Sigmoid colon (tissue), 7 donors: ENCODE measurements at regions of chr3 and their contacts with region 1.

Region 1: GRCh38 chr3:197002701-197003454 is 26.7 kb downstream of the MELTF start:
- DNase-seq: peak; percentile 85
- H3K4me3 ChIP-seq: peak overlapping the region; percentile 46 to 80 (median 72)
- H3K27ac ChIP-seq: peak overlapping the region; percentile 82 to 90 (median 86)
- H3K4me1 ChIP-seq: peaks cover 0 to 18% (median 13%) of the 10 kb centered on the region in 4 donors
- H3K27me3 ChIP-seq: no peaks in the 10 kb centered on the region
- CTCF ChIP-seq: peak in 3 of 4 experiments; percentile 19 to 79 (median 41)
- EP300 ChIP-seq: no peak
- POLR2A ChIP-seq: no peak

Region 2: GRCh38 chr3:196927571-196928453 is 75.1 kb before region 1 on chr3:
- intact Hi-C with region 1: no loop called
- DNase-seq: no peak
- H3K4me3 ChIP-seq: no peak overlapping the region
- H3K27ac ChIP-seq: no peak overlapping the region
- H3K4me1 ChIP-seq: no peaks in the 10 kb centered on the region
- H3K27me3 ChIP-seq: no peaks in the 10 kb centered on the region
- CTCF ChIP-seq: no peak
- EP300 ChIP-seq: no peak
- POLR2A ChIP-seq: no peak

Region 3: GRCh38 chr3:197029511-197030167 is 26.8 kb after region 1 on chr3 and contains the start of gene MELTF:
- intact Hi-C with region 1: loop called (anchors 2 kb)
- DNase-seq: no peak
- H3K4me3 ChIP-seq: peak within 1 kb of the TSS; percentile 39 to 59 (median 46)
- H3K27ac ChIP-seq: peak within 1 kb of the TSS in 3 of 4 donors; percentile 27 to 66 (median 56)
- H3K4me1 ChIP-seq: peaks cover 0 to 26% (median 18%) of the 10 kb centered on the region in 4 donors
- H3K27me3 ChIP-seq: peaks cover 0 to 22% (median 7%) of the 10 kb centered on the region in 3 donors
- CTCF ChIP-seq: peak in 2 of 4 experiments; percentile 11 to 85
- EP300 ChIP-seq: no peak
- POLR2A ChIP-seq: no peak
- total RNA-seq, gene MELTF: 2.6 to 6.1 (median 3.1) TPM

Region 4: GRCh38 chr3:197168606-197169005 is 165.7 kb after region 1 on chr3:
- intact Hi-C with region 1: no loop called
- DNase-seq: no peak
- H3K4me3 ChIP-seq: no peak overlapping the region
- H3K27ac ChIP-seq: no peak overlapping the region
- H3K4me1 ChIP-seq: peaks cover 0 to 5% (median 0%) of the 10 kb centered on the region in 4 donors
- H3K27me3 ChIP-seq: no peaks in the 10 kb centered on the region
- CTCF ChIP-seq: no peak
- EP300 ChIP-seq: no peak
- POLR2A ChIP-seq: no peak

Region 5: DNA sequence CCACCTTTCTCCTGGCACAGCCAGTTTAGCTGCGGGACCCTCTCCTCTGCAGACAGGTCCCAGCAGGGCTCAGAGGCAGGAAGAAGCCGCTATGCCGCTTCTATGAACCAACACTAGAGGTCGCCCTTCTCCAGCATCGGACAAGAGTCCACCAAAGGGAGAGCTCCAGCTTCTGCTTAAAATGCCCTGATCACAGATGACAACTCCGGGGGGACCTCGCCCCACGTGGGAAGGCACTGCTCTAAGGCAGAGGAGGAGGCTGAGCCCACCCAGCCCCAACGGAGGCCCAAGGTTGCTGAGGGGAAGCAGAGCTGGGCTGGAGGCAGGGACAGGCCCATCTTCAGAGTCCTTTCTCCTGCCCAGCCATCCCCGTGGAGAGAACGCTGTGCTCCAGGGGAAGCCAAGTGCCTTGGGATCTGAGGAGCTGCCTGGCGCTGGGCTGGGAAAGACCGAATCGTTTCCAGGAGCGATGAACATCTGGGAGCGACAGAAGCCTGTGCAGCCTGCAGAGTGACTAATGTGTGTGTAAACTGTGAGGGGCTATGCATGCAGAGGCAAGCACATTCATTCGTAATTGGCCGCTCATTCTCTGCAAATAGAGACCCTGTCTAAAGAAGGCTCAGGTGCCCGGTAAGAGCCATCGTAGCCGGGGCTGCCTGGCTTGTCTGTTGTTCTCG is 596.3 kb after region 1 on chr3:
- intact Hi-C with region 1: no loop called
- DNase-seq: peak; percentile 86
- H3K4me3 ChIP-seq: no peak overlapping the region
- H3K27ac ChIP-seq: no peak overlapping the region
- H3K4me1 ChIP-seq: peaks cover 0 to 10% (median 4%) of the 10 kb centered on the region in 4 donors
- H3K27me3 ChIP-seq: no peaks in the 10 kb centered on the region
- CTCF ChIP-seq: peak; percentile 70 to 89 (median 82)
- EP300 ChIP-seq: no peak
- POLR2A ChIP-seq: no peak